ENCODE measurements at regions of chrX and their contacts with region 1.

Region 1: DNA sequence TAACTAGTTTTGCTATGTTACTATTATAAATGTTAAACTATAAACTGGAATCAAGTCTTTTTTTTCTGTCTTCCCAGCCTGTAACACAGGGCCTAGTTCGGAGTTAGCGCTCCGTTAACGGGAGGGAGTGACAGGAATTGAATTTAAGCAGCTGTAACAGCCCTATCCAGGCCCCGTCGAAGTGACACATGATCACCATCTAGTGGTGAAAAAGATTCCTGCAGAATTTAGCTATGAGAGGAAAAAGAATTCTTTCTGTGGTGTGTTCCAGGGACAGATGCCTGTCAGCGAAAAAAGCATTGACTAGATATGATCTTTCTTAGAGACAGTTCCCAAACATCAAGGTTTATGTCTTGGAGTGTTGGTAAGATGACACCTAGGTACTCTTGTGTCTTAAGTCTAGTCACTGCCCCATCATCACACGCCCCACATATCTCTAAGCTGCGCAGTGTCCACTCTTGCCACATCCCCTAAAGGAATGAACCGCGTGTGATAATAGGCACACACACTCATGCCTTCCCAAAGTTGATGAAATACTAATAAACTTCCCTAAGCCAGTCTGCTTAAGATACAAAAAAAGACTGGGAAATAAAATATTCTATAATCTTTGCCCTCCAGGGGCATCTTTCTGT is 2.0 kb downstream of the GAB3 start:
- DNase-seq: peak; percentile 77
- H3K4me3 ChIP-seq: no peak overlapping the region
- H3K27ac ChIP-seq: no peak overlapping the region
- H3K4me1 ChIP-seq: no peaks in the 10 kb centered on the region
- H3K27me3 ChIP-seq: peaks cover 17% of the 10 kb centered on the region
- CTCF ChIP-seq: peak; percentile 79

Region 2: DNA sequence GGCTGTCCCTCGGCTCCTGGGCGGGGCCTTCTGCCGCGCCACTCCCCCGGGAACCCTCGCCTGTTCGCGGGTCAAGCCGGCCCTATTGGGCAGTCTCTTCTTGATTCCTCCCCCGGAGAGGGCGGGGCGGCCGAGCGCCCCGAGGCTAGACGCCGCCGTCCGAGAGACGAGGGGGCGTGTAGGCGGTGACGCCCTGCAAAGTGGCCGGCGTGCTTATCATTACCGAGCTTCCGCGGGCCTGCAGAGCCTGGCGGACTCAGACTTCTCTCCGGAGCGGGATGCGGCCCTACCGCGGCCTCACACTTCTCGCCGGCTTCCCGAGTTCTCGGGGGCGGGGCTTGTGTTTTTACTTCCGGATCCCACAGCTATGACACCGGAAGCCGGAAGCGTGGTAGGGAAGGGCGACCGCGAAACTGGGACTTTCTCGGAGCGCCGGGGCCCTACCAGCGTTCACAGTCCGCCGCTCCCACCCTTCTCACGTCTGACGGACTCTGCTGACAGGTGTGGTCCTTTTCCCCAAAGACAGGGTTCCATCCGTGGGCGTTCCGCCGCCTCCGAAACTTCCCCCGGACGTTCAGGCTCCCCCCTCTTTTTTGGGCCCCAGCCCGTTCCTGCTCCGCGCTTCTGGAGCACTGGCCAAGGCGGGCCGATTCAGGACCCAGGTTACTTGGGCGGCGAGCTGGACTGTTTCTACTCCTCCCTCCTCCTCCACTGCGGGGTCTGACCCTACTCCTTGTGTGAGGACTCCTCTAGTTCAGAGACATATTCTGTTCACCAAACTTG is 201.4 kb before region 1 on chrX and contains the start of gene IKBKG:
- CTCF ChIA-PET with region 1: no interaction called
- POLR2A ChIA-PET with region 1: no interaction called
- intact Hi-C with region 1: loop called (anchors 10 kb)
- DNase-seq: peak; percentile 92
- H3K4me3 ChIP-seq: peak within 1 kb of the TSS; percentile 91
- H3K27ac ChIP-seq: peak within 1 kb of the TSS; percentile 95
- H3K4me1 ChIP-seq: peaks cover 15% of the 10 kb centered on the region
- H3K27me3 ChIP-seq: no peaks in the 10 kb centered on the region
- CTCF ChIP-seq: no peak
- total RNA-seq, gene IKBKG: 28.0 and 30.4 TPM in 2 replicates

Region 3: DNA sequence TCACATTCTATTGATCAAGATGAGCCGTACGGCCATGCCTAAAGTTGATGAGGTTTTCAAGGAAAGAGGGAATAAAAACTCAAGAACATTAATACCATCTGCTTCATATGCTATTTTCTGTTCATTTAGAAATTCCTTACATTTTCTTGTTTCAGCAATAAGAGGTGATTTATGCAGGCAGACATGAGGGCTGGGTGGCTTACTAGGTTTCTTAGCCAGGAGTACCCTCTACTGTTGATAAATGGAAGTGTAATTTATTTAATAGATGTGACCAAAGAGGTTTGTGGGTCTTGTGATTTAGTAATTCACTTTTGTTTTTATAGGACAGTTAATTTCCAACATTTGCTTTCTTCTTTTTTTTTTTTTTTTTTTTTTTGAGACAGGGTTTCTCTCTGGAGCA is 92.0 kb after region 1 on chrX:
- CTCF ChIA-PET with region 1: no interaction called
- POLR2A ChIA-PET with region 1: no interaction called
- intact Hi-C with region 1: loop called (anchors 5 kb)
- DNase-seq: peak; percentile 60
- H3K4me3 ChIP-seq: no peak overlapping the region
- H3K27ac ChIP-seq: no peak overlapping the region
- H3K4me1 ChIP-seq: no peaks in the 10 kb centered on the region
- H3K27me3 ChIP-seq: no peaks in the 10 kb centered on the region
- CTCF ChIP-seq: peak; percentile 51; the same call in 1 of the 2 replicates